Esophagus muscularis mucosa (tissue), 4 donors: ENCODE measurements at regions of chr9 and their contacts with region 1.

Region 1: DNA sequence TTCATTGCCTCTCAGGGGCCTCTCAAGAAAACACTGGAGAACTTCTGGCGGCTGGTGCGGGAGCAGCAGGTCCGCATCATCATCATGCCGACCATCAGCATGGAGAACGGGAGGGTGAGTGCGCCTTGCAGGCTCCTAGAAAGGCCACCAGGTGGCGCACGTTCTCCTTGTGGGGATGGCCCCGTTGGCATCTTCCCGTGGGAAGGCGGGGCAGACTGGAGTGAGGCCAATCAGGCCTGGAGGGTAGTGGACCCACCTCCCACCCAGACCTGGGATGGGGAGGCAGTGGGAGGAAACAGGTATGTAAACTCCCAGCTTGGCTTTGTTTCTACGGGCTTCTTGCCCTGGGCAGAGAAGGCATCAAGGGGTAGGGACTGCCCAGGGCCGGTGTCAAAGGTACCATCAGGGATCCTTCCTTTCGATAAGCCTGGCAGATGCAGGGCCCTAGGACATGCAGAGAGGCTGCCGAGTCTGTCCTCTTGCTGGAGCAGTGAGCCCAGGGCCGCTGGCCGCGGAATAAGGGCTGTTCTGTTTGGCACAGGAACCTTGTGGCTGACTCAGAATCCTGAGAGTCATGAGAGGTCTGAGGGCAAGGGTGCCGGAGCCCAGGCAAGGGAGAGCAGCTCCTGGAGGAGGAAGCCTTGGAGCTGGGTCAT is 18.9 kb upstream of the SPTLC1 start:
- DNase-seq: no peak
- H3K4me3 ChIP-seq: peak overlapping the region; percentile 14 to 40 (median 24)
- H3K27ac ChIP-seq: peak overlapping the region in 2 of 4 donors; percentile 16 to 30
- H3K4me1 ChIP-seq: peaks cover 7 to 18% (median 15%) of the 10 kb centered on the region in 4 donors
- H3K27me3 ChIP-seq: peaks cover 0 to 24% (median 0%) of the 10 kb centered on the region in 4 donors
- CTCF ChIP-seq: peak; percentile 88 to 97 (median 89)
- EP300 ChIP-seq: no peak
- POLR2A ChIP-seq: no peak

Region 2: GRCh38 chr9:92242260-92243136 is 108.4 kb after region 1 on chr9:
- intact Hi-C with region 1: loop called (anchors 5 kb)
- DNase-seq: no peak
- H3K4me3 ChIP-seq: no peak overlapping the region
- H3K27ac ChIP-seq: no peak overlapping the region
- H3K4me1 ChIP-seq: no peaks in the 10 kb centered on the region
- H3K27me3 ChIP-seq: no peaks in the 10 kb centered on the region
- CTCF ChIP-seq: peak in 1 of 3 experiments; percentile 14
- EP300 ChIP-seq: no peak
- POLR2A ChIP-seq: no peak

Region 3: DNA sequence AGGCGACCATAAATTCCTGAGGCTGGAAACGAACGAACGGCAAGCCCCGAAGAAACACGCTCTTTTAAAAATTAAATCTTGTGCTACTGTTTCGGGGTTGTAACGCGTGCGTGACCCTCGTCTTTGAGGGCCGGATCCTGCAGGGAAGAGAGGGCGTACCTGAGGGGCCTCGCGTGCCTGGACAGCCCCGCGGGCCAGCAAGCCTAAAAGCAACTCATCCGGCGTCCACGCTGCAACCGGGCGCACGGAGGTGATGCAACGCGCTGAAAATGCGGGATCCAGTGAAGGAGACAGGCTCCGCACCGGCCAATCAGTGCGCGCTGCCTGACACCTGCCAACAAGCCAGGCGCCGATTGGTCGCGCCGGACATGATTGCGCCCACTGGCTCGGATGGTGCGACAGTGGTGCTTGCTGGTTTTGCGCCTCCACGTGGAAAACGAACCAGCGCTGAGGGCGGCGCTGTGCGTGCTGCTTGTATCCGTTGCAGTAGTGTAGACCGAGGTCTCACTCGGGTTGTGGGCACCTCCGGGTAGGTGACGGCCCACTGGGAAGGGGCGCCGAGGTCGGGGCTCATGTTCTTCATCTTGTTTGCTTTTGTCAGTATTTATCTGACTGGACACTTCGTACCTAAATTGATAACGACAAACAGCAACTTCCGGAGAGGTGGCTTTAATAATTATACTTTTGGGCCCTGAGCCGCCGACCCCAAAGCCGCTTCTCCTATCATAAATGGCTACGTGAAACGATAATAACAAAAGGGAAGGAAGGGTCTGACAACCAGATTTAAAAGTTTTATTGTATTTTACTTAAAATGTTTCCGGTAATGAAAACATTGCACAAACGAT is 159.6 kb after region 1 on chr9 and contains the start of gene IARS1:
- intact Hi-C with region 1: loop called (anchors 5 kb)
- DNase-seq: peak; percentile 100
- H3K4me3 ChIP-seq: peak within 1 kb of the TSS; percentile 71 to 86 (median 74)
- H3K27ac ChIP-seq: peak within 1 kb of the TSS; percentile 70 to 87 (median 75)
- H3K4me1 ChIP-seq: peaks cover 11 to 34% (median 30%) of the 10 kb centered on the region in 4 donors
- H3K27me3 ChIP-seq: no peaks in the 10 kb centered on the region
- CTCF ChIP-seq: peak; percentile 34 to 50 (median 35)
- EP300 ChIP-seq: no peak
- POLR2A ChIP-seq: no peak
- total RNA-seq, gene IARS1: 49.8 to 80.6 (median 67.1) TPM